GM12878 (cell line): ENCODE measurements at regions of chrX and their contacts with region 1.

Region 1: GRCh38 chrX:107684956-107685385 is 56.7 kb downstream of the PRPS1 start:
- DNase-seq: no peak
- ATAC-seq: peak; percentile 92
- H3K4me3 ChIP-seq: no peak overlapping the region
- H3K27ac ChIP-seq: 0 out of 2 replicates have a peak overlapping the region, but pooled peaks have one; percentile 27
- H3K4me1 ChIP-seq: peaks cover 18% of the 10 kb centered on the region
- H3K27me3 ChIP-seq: no peaks in the 10 kb centered on the region
- CTCF ChIP-seq: no peak
- EP300 ChIP-seq: no peak
- POLR2A ChIP-seq: no peak
- RAD21 ChIP-seq: no peak

Region 2: DNA sequence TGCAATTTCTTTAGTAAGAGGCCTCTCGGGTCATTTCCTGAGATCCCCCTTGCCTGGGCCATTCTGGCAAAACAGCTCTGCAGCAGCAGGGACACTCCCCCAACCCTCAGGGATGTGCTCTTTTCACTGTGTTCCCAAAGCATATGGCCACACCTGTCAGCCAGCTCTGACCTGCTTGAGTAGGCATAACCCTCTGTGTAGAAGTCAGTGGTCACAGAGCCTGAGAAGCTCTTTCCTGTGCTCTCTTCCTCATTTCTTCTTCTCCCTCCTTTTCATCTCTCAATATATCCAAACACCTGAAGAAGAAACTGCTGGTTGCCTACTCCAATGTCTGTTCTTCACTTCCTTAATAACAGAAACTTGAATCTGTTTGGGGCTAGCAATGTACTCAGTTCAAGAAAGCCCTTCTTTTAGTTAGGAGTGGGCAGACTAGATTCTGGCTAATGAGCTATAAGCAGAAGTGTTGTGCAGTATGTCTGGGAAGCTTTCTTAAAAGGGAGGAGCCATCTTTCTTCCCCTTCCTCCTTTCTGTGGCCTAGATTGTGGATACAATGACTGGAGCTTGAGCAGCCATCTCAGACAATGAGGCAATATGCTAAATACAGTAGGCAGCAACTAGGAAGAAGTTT is 16.6 kb after region 1 on chrX:
- CTCF ChIA-PET with region 1: interaction called, 5 read pairs
- POLR2A ChIA-PET with region 1: interaction called, 287 read pairs
- RAD21 ChIA-PET with region 1: interaction called, 6 read pairs
- SMC1A ChIA-PET with region 1: interaction called, 425 read pairs
- in situ Hi-C with region 1: no loop called
- intact Hi-C with region 1: no loop called
- DNase-seq: no peak
- ATAC-seq: peak; percentile 87
- H3K4me3 ChIP-seq: no peak overlapping the region
- H3K27ac ChIP-seq: peak overlapping the region; percentile 46
- H3K4me1 ChIP-seq: peaks cover 24% of the 10 kb centered on the region; the same call in 1 of the 2 replicates
- H3K27me3 ChIP-seq: no peaks in the 10 kb centered on the region
- CTCF ChIP-seq: no peak
- EP300 ChIP-seq: no peak
- POLR2A ChIP-seq: no peak
- RAD21 ChIP-seq: no peak

Region 3: GRCh38 chrX:107710617-107711391 is 25.8 kb after region 1 on chrX:
- CTCF ChIA-PET with region 1: interaction called, 5 read pairs
- POLR2A ChIA-PET with region 1: interaction called, 287 read pairs
- RAD21 ChIA-PET with region 1: interaction called, 444 read pairs
- SMC1A ChIA-PET with region 1: interaction called, 425 read pairs
- in situ Hi-C with region 1: no loop called
- intact Hi-C with region 1: no loop called
- DNase-seq: peak; percentile 87
- ATAC-seq: peak; percentile 74
- H3K4me3 ChIP-seq: peak overlapping the region; percentile 51; the same call in 1 of the 2 replicates
- H3K27ac ChIP-seq: peak overlapping the region; percentile 83
- H3K4me1 ChIP-seq: peaks cover 15% of the 10 kb centered on the region
- H3K27me3 ChIP-seq: no peaks in the 10 kb centered on the region
- CTCF ChIP-seq: no peak
- EP300 ChIP-seq: peak; percentile 66 to 97
- POLR2A ChIP-seq: no peak
- RAD21 ChIP-seq: no peak